A549 (cell line): ENCODE measurements at regions of chr12 and their contacts with region 1.

Region 1: GRCh38 chr12:98593351-98594049 is at the start of gene SLC25A3:
- DNase-seq: peak; percentile 92 to 100
- ATAC-seq: peak; percentile 99
- H3K4me3 ChIP-seq: peak within 1 kb of the TSS; percentile 85
- H3K27ac ChIP-seq: peak within 1 kb of the TSS; percentile 96 to 97
- H3K4me1 ChIP-seq: peaks cover 24% of the 10 kb centered on the region
- CTCF ChIP-seq: no peak
- EP300 ChIP-seq: no peak
- POLR2A ChIP-seq: peak; percentile 99
- RAD21 ChIP-seq: no peak
- polyA plus RNA-seq, gene SLC25A3: 1,065 and 1,232 TPM in 2 replicates

Region 2: GRCh38 chr12:98060411-98060810 is 533.1 kb before region 1 on chr12:
- CTCF ChIA-PET with region 1: no interaction called
- POLR2A ChIA-PET with region 1: no interaction called
- DNase-seq: no peak
- ATAC-seq: no peak
- H3K4me3 ChIP-seq: no peak overlapping the region
- H3K27ac ChIP-seq: no peak overlapping the region
- H3K4me1 ChIP-seq: no peaks in the 10 kb centered on the region
- CTCF ChIP-seq: no peak
- EP300 ChIP-seq: no peak
- POLR2A ChIP-seq: no peak
- RAD21 ChIP-seq: no peak

Region 3: DNA sequence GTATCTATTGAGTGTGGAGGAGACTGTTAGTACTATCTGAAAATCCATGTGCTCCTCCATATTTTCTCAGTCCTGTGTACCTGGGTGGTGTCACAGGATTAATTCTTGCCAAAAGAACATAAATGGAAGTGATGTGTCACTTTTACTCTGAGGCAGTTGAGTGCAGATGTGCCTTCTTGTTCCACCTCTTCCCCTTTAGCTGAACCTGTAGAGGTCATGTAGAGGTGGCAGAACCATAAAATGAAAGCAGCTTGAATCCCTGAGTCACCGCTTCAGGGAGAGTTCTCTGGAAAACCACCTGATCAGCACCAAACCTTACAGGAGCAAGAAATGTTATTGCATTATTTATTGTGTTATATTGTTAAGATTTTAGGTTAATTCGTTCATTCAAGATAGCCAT is 14.7 kb before region 1 on chr12:
- CTCF ChIA-PET with region 1: interaction called, 4 read pairs
- POLR2A ChIA-PET with region 1: interaction called, 10 read pairs
- DNase-seq: peak in 1 of 2 experiments; percentile 52
- ATAC-seq: peak; percentile 47 to 48; a peak in 4 of 6 replicates
- H3K4me3 ChIP-seq: no peak overlapping the region
- H3K27ac ChIP-seq: no peak overlapping the region
- H3K4me1 ChIP-seq: peaks cover 21% of the 10 kb centered on the region
- CTCF ChIP-seq: no peak
- EP300 ChIP-seq: no peak
- POLR2A ChIP-seq: no peak
- RAD21 ChIP-seq: no peak

Region 4: GRCh38 chr12:98606357-98606988 is 13.0 kb after region 1 on chr12:
- CTCF ChIA-PET with region 1: interaction called, 5 read pairs
- POLR2A ChIA-PET with region 1: interaction called, 19 read pairs
- DNase-seq: no peak
- ATAC-seq: peak; percentile 32 to 33; a peak in 4 of 6 replicates
- H3K4me3 ChIP-seq: no peak overlapping the region
- H3K27ac ChIP-seq: no peak overlapping the region
- H3K4me1 ChIP-seq: no peaks in the 10 kb centered on the region
- CTCF ChIP-seq: no peak; the same call in 2 of the 3 replicates
- EP300 ChIP-seq: no peak
- POLR2A ChIP-seq: no peak
- RAD21 ChIP-seq: peak; percentile 26 to 36; a peak in 2 of 5 replicates

Region 5: GRCh38 chr12:98644711-98645402 is 51.4 kb after region 1 on chr12 and contains the starts of genes APAF1 and IKBIP:
- CTCF ChIA-PET with region 1: interaction called, 5 read pairs
- POLR2A ChIA-PET with region 1: interaction called, 23 read pairs
- DNase-seq: peak; percentile 90 to 98
- ATAC-seq: peak; percentile 86 to 91
- H3K4me3 ChIP-seq: peak within 1 kb of the TSS; percentile 99
- H3K27ac ChIP-seq: peak within 1 kb of the TSS; percentile 78 to 93
- H3K4me1 ChIP-seq: peaks cover 13% of the 10 kb centered on the region; the same call in 2 of the 3 replicates
- CTCF ChIP-seq: no peak; the same call in 1 of the 3 replicates
- EP300 ChIP-seq: no peak
- POLR2A ChIP-seq: peak; percentile 81
- RAD21 ChIP-seq: no peak
- polyA plus RNA-seq, gene APAF1: 12.9 and 15.7 TPM in 2 replicates
- polyA plus RNA-seq, gene IKBIP: 41.1 and 67.6 TPM in 2 replicates

Region 6: GRCh38 chr12:98653866-98654493 is 60.5 kb after region 1 on chr12:
- CTCF ChIA-PET with region 1: interaction called, 10 read pairs
- POLR2A ChIA-PET with region 1: interaction called, 3 read pairs
- DNase-seq: peak; percentile 33 to 77
- ATAC-seq: peak; percentile 64 to 83; a peak in 3 of 6 replicates
- H3K4me3 ChIP-seq: no peak overlapping the region
- H3K27ac ChIP-seq: no peak overlapping the region
- H3K4me1 ChIP-seq: no peaks in the 10 kb centered on the region
- CTCF ChIP-seq: peak; percentile 88
- EP300 ChIP-seq: no peak
- POLR2A ChIP-seq: no peak
- RAD21 ChIP-seq: peak; percentile 91 to 94